ENCODE measurements at regions of chr16 and their contacts with region 1.

Region 1: DNA sequence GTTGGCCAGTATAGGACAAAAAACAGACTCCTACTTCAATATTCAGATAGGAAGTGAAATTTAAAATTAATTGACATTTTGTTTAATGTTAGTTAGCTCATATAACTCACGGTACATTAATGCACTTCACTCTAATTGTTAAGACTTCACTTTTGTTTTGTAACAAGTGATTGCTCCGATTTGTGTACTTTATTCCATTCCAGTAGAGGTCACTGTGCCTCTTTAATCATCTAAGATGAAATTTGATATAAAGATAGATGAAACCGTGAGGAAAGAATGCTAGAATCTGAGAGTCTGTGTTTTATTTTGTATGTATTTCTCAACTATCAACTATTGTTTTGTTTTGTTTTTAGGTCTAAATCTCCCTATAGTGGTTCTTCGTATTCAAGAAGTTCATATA is 29.0 kb downstream of the RBBP6 start:
- DNase-seq: no peak
- ATAC-seq: no peak
- H3K4me3 ChIP-seq: no peak overlapping the region
- H3K27ac ChIP-seq: no peak overlapping the region
- H3K4me1 ChIP-seq: no peaks in the 10 kb centered on the region
- H3K27me3 ChIP-seq: no peaks in the 10 kb centered on the region
- CTCF ChIP-seq: no peak

Region 2: DNA sequence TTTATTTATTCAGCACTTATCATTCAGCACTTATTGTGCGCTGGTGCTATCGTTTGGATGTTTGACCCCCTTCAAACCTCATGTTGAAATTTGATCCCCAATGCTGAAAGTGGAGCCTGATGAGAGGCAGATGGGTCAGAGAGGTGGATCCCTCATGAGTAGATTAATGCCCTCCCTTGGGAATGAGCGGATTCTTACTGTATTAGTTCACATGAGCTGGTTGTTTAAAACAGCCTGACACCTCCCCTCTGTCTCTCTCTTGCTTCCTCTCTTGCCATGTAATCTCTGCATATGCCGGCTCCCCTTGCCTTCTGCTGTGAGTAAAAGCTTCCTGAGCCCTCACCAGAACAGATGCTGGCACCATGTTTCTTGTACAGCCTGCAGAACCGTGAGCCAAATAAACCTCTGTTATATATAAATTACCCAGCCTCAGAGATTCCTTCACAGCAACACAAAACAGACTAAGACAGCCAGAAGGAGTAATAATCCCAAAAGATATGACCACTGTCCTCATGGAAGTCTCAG is 201.1 kb before region 1 on chr16:
- intact Hi-C with region 1: no loop called
- DNase-seq: no peak
- ATAC-seq: no peak
- H3K4me3 ChIP-seq: no peak overlapping the region
- H3K27ac ChIP-seq: no peak overlapping the region
- H3K4me1 ChIP-seq: no peaks in the 10 kb centered on the region
- H3K27me3 ChIP-seq: no peaks in the 10 kb centered on the region
- CTCF ChIP-seq: no peak

Region 3: GRCh38 chr16:24800586-24800985 is 232.2 kb after region 1 on chr16:
- intact Hi-C with region 1: loop called (anchors 10 kb)
- DNase-seq: no peak
- ATAC-seq: no peak
- H3K4me3 ChIP-seq: no peak overlapping the region
- H3K27ac ChIP-seq: no peak overlapping the region
- H3K4me1 ChIP-seq: peaks cover 10% of the 10 kb centered on the region
- H3K27me3 ChIP-seq: no peaks in the 10 kb centered on the region
- CTCF ChIP-seq: peak; percentile 13